ENCODE measurements at regions of chr20 and their contacts with region 1.

Region 1: DNA sequence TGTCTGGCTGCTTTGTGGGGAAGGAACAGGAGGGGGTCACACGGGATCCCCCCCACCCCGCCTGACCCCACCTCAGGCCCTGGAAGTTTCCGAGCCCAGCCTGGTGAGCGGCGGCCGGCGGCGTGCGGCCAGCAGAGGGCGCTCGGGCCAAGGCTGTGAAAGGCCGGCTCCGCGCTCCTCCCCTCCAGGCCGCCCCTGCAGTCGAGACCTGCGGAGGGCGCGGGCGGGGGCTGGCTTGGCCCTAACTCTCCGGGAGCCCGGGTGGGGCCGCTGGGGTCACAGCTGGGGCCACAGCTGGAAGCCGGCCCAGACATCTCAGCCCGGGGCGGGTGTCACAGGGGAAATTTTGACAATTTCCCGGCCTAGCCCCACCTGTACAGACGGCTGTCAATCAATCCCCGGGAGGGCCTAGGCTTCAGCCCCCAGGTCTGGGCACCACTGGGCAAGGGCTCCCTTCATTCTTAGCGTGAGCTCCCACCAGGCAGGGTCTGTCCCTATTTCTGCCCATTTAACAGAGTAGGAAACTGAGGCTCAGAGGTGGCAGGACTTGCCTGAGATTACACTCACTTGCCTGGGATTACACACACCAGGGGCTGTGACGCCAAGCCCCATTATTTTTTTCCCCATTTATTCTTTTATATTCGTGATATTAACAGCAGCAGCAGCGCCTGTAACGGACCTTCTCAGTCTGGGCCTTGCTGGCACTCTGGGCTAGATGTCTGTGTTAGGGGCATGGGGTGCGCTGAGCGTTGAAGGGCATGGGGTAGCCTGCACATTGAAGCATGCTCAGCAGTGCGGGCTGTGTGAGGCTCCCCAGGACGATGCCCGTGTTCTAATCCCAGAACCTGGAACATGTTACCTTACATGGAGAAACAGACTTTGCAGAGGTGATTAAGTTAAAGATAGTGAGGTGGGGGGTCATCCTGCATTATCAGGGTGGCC is 23.0 kb downstream of the ZBP1 start:
- DNase-seq: peak; percentile 75
- H3K4me3 ChIP-seq: no peak overlapping the region
- H3K27ac ChIP-seq: no peak overlapping the region
- H3K4me1 ChIP-seq: peaks cover 13% of the 10 kb centered on the region
- CTCF ChIP-seq: peak; percentile 91

Region 2: DNA sequence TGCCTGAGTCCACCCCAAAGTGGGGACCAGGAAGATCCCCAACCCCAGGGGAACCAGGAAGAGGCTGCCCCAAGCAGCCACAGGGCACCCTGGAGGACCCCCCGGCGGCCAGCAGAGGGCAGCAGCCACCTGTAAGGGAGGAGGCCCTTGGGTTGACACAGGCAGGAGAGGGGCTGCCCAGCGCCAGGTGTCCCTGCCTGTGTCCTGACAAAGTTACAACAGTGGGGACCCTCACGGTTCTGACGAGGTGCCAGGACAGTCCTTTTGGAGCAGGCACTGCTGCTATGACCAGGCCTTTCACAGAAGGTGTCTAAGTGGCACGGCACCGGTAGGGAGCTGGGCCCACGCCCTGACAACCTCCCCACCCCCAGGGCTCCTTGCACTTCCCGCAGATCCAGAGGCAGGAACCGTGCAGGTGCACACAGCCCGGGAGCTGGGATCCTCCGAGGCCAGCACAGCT is 507.5 kb before region 1 on chr20:
- CTCF ChIA-PET with region 1: no interaction called
- POLR2A ChIA-PET with region 1: no interaction called
- intact Hi-C with region 1: loop called (anchors 5 kb)
- DNase-seq: peak; percentile 80
- H3K4me3 ChIP-seq: no peak overlapping the region
- H3K27ac ChIP-seq: no peak overlapping the region
- H3K4me1 ChIP-seq: no peaks in the 10 kb centered on the region
- CTCF ChIP-seq: peak; percentile 90

Region 3: GRCh38 chr20:57498425-57499400 is 98.6 kb before region 1 on chr20:
- CTCF ChIA-PET with region 1: no interaction called
- POLR2A ChIA-PET with region 1: no interaction called
- intact Hi-C with region 1: loop called (anchors 1 kb)
- DNase-seq: peak; percentile 70
- H3K4me3 ChIP-seq: no peak overlapping the region
- H3K27ac ChIP-seq: peak overlapping the region; percentile 14
- H3K4me1 ChIP-seq: peaks cover 41% of the 10 kb centered on the region
- CTCF ChIP-seq: peak; percentile 75

Region 4: DNA sequence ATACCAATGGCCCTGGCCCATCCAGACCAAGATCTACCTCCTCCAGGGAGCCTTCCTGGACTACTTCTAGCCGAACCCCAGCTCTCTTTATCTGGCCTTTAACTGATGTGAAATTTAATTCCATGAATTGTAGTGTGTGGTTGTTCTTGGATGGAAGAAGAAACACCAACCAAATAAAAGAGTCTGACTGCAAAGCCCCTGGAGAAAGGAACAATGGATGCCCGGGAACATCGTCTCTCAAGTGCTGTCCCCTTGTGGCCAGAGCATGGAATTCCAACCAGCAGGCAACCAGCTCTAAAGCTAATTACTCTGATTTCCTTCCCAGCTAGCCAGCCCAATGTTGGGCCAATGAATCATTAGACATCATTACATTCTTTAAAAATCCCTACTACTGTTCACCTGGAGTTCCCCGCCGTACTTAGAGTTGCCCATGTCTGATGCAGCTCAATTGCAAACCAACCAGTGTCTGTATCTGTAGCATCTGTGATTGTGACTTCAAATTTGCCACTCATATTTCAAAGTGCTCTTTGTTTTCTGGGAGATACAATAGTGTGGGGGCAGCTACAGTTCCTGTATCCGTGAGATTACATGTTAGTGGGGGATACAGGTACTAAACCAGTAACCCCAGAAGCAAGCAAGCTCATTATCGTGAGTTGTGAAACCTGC is 490.1 kb after region 1 on chr20:
- CTCF ChIA-PET with region 1: no interaction called
- POLR2A ChIA-PET with region 1: no interaction called
- intact Hi-C with region 1: loop called (anchors 1 kb)
- DNase-seq: peak; percentile 42
- H3K4me3 ChIP-seq: no peak overlapping the region
- H3K27ac ChIP-seq: no peak overlapping the region
- H3K4me1 ChIP-seq: no peaks in the 10 kb centered on the region
- CTCF ChIP-seq: peak; percentile 91

Region 5: DNA sequence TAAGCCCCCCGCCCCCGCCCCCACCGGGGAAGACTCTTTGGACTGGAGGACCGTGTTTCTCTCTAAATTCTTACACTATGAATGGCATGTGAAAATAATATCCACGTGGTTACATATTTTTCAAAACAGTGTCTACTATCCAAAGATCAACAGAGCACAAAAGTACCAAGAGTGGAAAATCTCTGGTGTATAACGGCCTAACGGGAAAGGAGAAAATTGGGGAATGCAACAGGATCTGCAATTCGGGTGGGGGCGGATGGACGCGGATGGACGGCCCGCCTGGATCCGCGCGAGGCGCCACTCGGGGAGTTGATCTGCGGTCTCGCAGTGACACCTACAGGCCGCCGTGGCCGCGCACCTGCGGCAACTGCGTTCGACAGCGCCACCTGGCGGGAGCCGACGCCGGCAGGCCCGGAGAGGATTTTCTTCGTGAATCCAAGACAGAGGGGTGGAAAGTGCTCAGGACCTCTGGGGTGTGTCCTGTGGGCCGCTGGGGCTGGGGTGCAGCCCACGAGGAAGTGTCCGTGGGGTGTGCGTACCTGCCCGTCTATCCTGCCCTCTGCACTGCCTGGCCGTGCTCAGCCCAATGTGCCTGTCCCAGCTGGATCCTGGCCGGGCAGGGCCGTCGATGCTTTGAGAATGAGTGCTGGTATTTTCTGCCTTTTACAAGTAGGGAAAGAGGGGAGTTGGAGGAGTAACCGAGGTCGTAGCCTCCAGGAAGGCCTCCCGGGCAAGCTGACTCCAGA is 612.6 kb after region 1 on chr20:
- CTCF ChIA-PET with region 1: no interaction called
- POLR2A ChIA-PET with region 1: no interaction called
- intact Hi-C with region 1: loop called (anchors 2 kb)
- DNase-seq: peak; percentile 77
- H3K4me3 ChIP-seq: no peak overlapping the region
- H3K27ac ChIP-seq: no peak overlapping the region
- H3K4me1 ChIP-seq: no peaks in the 10 kb centered on the region
- CTCF ChIP-seq: peak; percentile 100